ENCODE measurements at regions of chr1 and their contacts with region 1.

Region 1: GRCh38 chr1:39098546-39099250 is 72.5 kb downstream of the NDUFS5 start:
- DNase-seq: peak; percentile 26 to 92 (median 54)
- ATAC-seq: peak; percentile 85
- H3K4me3 ChIP-seq: no peak overlapping the region
- H3K4me3 Mint-ChIP-seq: no peak overlapping the region
- H3K27ac ChIP-seq: no peak overlapping the region
- H3K27ac Mint-ChIP-seq: no peak overlapping the region
- H3K4me1 ChIP-seq: peaks cover 7% of the 10 kb centered on the region
- H3K4me1 Mint-ChIP-seq: peaks cover 22% of the 10 kb centered on the region
- H3K27me3 ChIP-seq: no peaks in the 10 kb centered on the region
- H3K27me3 Mint-ChIP-seq: no peaks in the 10 kb centered on the region
- CTCF ChIP-seq: peak; percentile 62

Region 2: DNA sequence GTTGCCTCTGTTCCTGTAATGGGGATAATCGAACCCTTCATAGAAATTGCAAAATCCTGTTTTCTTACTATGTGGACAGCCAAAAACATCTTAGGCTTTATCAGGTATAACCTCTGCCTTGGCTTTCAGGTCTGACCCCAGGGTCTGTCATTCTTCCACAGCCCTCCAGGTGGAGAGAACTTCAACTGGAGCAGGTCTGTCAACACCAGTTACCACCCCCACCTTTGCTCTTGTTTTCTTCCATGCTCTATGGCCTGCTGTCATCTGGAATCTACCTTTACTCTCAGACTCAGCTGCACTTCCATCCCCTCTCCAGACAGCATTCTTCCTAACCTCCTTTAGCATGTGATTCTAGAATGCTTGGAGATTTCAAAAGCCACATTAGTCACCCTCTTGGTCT is 206.9 kb before region 1 on chr1:
- CTCF ChIA-PET with region 1: no interaction called
- POLR2A ChIA-PET with region 1: no interaction called
- intact Hi-C with region 1: loop called in 1 of 2 experiments (anchors 10 kb)
- DNase-seq: peak in 2 of 14 experiments; percentile 28 to 48
- ATAC-seq: peak; percentile 62
- H3K4me3 ChIP-seq: no peak overlapping the region
- H3K4me3 Mint-ChIP-seq: no peak overlapping the region
- H3K27ac ChIP-seq: no peak overlapping the region
- H3K27ac Mint-ChIP-seq: no peak overlapping the region
- H3K4me1 ChIP-seq: no peaks in the 10 kb centered on the region
- H3K4me1 Mint-ChIP-seq: no peaks in the 10 kb centered on the region
- H3K27me3 ChIP-seq: no peaks in the 10 kb centered on the region
- H3K27me3 Mint-ChIP-seq: no peaks in the 10 kb centered on the region
- CTCF ChIP-seq: no peak

Region 3: GRCh38 chr1:39189592-39190041 is 90.9 kb after region 1 on chr1:
- CTCF ChIA-PET with region 1: interaction called, 13 read pairs
- POLR2A ChIA-PET with region 1: interaction called, 8 read pairs
- intact Hi-C with region 1: loop called (anchors 1 to 2 kb)
- DNase-seq: no peak
- ATAC-seq: no peak
- H3K4me3 ChIP-seq: no peak overlapping the region
- H3K4me3 Mint-ChIP-seq: no peak overlapping the region
- H3K27ac ChIP-seq: no peak overlapping the region
- H3K27ac Mint-ChIP-seq: peak overlapping the region; percentile 41
- H3K4me1 ChIP-seq: peaks cover 48% of the 10 kb centered on the region
- H3K4me1 Mint-ChIP-seq: peaks cover 68% of the 10 kb centered on the region
- H3K27me3 ChIP-seq: no peaks in the 10 kb centered on the region
- H3K27me3 Mint-ChIP-seq: no peaks in the 10 kb centered on the region
- CTCF ChIP-seq: no peak

Region 4: DNA sequence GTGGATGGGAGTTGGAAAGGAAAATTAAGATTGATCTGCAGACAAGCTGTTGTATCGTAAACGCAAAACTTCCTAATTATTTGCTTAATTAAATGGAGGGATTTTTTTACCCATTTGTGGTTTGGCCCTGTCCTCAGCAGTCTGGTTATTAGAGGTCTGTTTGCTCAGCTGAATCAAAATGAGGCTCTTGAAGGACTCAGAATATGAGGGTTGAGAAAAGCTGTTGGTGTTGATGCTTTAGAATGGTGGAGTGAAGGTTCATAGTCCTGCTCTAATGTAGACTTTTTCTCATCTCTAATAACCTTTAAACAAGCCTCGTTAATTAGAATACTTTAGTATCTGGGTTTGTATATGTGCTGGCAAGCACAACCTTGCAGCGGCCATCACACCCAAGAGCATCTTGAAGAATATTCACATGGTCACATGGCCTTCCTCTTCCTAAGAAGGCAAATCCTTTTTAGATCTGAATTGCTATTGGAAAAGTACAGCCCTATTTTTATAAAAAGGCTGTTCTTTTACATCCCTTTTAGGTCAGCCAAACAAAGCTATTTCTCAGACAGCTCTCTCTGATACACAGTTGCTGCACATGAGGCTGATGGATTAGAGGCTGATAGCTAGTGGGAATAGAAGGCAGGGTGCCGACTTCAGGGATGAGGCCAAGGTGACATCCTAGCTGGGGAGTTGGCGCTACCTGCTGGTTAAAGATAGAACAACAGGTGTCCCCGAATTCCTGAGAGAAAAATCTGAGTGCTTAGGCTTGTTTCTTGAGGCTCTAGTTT is 159.6 kb after region 1 on chr1:
- CTCF ChIA-PET with region 1: interaction called, 23 read pairs
- POLR2A ChIA-PET with region 1: interaction called, 3 read pairs
- intact Hi-C with region 1: loop called (anchors 1 to 2 kb)
- DNase-seq: peak; percentile 38 to 83 (median 62)
- ATAC-seq: peak; percentile 78
- H3K4me3 ChIP-seq: no peak overlapping the region
- H3K4me3 Mint-ChIP-seq: no peak overlapping the region
- H3K27ac ChIP-seq: peak overlapping the region; percentile 13 to 38
- H3K27ac Mint-ChIP-seq: peak overlapping the region; percentile 83
- H3K4me1 ChIP-seq: peaks cover 14% of the 10 kb centered on the region
- H3K4me1 Mint-ChIP-seq: peaks cover 43% of the 10 kb centered on the region
- H3K27me3 ChIP-seq: no peaks in the 10 kb centered on the region
- H3K27me3 Mint-ChIP-seq: no peaks in the 10 kb centered on the region
- CTCF ChIP-seq: peak; percentile 88

Region 5: DNA sequence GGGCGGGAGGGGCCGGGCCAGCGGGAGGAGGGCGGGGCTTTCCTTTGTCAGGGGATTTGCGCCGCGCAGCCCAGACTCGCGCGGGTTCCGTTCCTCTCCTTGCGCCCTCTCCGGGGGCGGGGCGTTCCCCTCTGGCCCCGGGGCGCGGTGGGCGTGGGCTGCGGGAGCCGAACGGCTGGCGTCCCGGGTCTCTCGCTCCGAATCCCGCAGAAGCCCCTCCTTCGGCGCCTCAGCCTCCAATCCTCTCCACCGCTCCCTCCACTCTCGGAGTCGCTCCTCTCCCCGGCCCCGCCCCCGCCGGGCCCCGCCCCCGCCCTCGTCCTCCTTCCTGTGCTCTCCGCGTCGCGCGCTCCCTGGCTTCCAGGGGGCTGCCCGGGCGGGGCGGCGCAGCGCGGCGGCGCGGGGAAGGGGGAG is 309.9 kb after region 1 on chr1:
- CTCF ChIA-PET with region 1: interaction called, 7 read pairs
- POLR2A ChIA-PET with region 1: interaction called, 4 read pairs
- intact Hi-C with region 1: loop called (anchors 2 to 5 kb)
- DNase-seq: peak; percentile 61 to 96 (median 79)
- ATAC-seq: peak; percentile 83
- H3K4me3 ChIP-seq: peak overlapping the region; percentile 61
- H3K4me3 Mint-ChIP-seq: peak overlapping the region; percentile 77
- H3K27ac ChIP-seq: peak overlapping the region in 1 of 2 donors; percentile 21
- H3K27ac Mint-ChIP-seq: no peak overlapping the region
- H3K4me1 ChIP-seq: peaks cover 40% of the 10 kb centered on the region
- H3K4me1 Mint-ChIP-seq: peaks cover 66% of the 10 kb centered on the region
- H3K27me3 ChIP-seq: no peaks in the 10 kb centered on the region
- H3K27me3 Mint-ChIP-seq: no peaks in the 10 kb centered on the region
- CTCF ChIP-seq: no peak

Region 6: GRCh38 chr1:39609618-39610331 is 511.1 kb after region 1 on chr1:
- CTCF ChIA-PET with region 1: interaction called, 3 read pairs
- POLR2A ChIA-PET with region 1: no interaction called
- intact Hi-C with region 1: loop called in 1 of 2 experiments (anchors 2 kb)
- DNase-seq: peak; percentile 59 to 86 (median 74)
- ATAC-seq: peak; percentile 87
- H3K4me3 ChIP-seq: no peak overlapping the region
- H3K4me3 Mint-ChIP-seq: peak overlapping the region; percentile 48
- H3K27ac ChIP-seq: no peak overlapping the region
- H3K27ac Mint-ChIP-seq: no peak overlapping the region
- H3K4me1 ChIP-seq: peaks cover 7% of the 10 kb centered on the region
- H3K4me1 Mint-ChIP-seq: peaks cover 12% of the 10 kb centered on the region
- H3K27me3 ChIP-seq: peaks cover 0 to 5% of the 10 kb centered on the region in 2 experiments
- H3K27me3 Mint-ChIP-seq: peaks cover 6% of the 10 kb centered on the region
- CTCF ChIP-seq: peak; percentile 74

Region 7: DNA sequence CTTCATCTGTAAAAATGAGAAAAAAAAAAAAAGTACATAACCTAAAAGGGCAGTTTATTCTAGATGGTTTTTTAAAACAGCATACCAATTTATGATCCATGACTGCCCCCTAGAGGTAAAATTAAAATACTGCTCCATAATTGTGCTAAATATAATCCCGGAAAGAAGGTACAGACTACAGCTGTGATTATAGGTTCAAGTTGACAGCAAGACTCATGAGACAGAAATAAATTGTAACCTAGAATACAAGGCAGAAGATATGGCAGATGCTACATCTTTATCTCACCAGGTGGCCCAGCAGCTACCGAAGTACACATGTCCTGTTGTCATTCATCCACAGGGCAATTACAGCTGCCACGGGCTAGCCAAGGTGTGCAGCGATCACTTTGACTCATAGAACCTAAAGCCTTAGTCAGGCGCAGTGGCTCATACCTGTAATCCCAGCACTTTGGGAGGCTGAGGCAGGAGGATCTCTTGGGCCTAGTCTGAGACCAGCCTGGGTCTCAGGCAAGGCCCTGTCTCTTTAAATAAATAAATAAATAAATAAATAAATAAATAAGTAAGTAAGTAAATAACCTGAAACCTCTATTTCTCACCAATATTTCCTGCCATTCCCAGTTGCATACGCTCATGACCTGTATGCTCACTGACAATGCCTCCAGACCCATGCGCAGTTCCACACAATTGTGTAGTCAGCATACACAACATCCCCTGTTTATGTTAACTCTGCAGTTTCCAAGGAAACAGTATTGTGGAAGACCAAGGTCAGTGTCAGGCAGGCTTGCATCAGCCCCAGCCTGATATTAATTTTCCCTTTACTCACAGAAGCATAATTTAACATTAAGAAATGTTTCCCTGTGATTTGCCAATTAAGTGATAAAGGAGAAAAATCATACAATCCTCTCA is 621.6 kb after region 1 on chr1:
- CTCF ChIA-PET with region 1: no interaction called
- POLR2A ChIA-PET with region 1: no interaction called
- intact Hi-C with region 1: loop called in 1 of 2 experiments (anchors 5 kb)
- DNase-seq: peak in 3 of 14 experiments; percentile 80 to 83 (median 81)
- ATAC-seq: peak; percentile 90
- H3K4me3 ChIP-seq: no peak overlapping the region
- H3K4me3 Mint-ChIP-seq: no peak overlapping the region
- H3K27ac ChIP-seq: no peak overlapping the region
- H3K27ac Mint-ChIP-seq: no peak overlapping the region
- H3K4me1 ChIP-seq: no peaks in the 10 kb centered on the region
- H3K4me1 Mint-ChIP-seq: no peaks in the 10 kb centered on the region
- H3K27me3 ChIP-seq: peaks cover 9 to 15% of the 10 kb centered on the region in 2 experiments
- H3K27me3 Mint-ChIP-seq: peaks cover 46% of the 10 kb centered on the region
- CTCF ChIP-seq: peak; percentile 78

Measured in CD4-positive, alpha-beta T cell (primary cell).